ENCODE measurements at regions of chr14 and their contacts with region 1.

Region 1: DNA sequence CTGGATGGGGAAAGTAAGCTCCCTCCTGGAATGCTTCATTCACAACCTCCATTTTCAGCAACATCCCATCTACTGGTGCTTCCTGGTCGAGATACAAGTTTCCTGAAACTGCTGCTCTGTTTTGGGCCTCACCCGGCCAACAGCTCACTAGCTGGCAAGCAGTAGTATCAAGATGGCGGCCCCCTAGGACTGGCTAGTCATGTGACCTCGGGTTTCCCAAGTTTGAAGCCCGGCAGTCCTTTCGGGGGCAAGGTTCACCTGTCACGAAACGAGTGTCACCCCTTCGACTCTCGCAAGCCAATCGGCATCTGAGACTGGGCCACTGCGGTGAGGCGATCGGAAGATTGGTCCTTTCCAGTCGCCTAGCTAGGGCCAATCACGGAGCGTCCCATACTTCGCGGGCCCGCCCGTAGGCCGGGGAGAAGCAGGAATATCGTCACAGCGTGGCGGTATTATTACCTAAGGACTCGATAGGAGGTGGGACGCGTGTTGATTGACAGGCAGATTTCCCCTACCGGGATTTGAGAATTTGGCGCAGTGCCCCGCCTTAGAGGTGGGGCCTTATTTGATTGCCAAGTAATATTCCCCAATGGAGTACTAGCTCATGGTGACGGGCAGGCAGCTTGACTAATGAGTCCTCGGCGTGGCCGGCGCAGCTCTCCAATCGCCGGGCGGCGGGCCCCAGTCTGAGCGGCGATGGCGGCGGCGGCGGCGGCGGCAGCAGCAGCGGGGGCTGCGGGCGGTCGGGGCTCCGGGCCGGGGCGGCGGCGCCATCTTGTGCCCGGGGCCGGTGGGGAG is at the start of gene PABPN1:
- DNase-seq: peak; percentile 100
- H3K4me3 ChIP-seq: peak within 1 kb of the TSS; percentile 82 to 99
- H3K27ac ChIP-seq: peak within 1 kb of the TSS; percentile 97
- H3K4me1 ChIP-seq: peaks cover 26% of the 10 kb centered on the region
- H3K27me3 ChIP-seq: no peaks in the 10 kb centered on the region
- CTCF ChIP-seq: no peak
- POLR2A ChIP-seq: peak in 1 of 2 donors; percentile 81
- total RNA-seq, gene PABPN1: 66.0 TPM

Region 2: GRCh38 chr14:23269193-23269592 is 51.8 kb before region 1 on chr14:
- intact Hi-C with region 1: loop called (anchors 10 kb)
- DNase-seq: no peak
- H3K4me3 ChIP-seq: no peak overlapping the region
- H3K27ac ChIP-seq: no peak overlapping the region
- H3K4me1 ChIP-seq: no peaks in the 10 kb centered on the region
- H3K27me3 ChIP-seq: no peaks in the 10 kb centered on the region
- CTCF ChIP-seq: no peak
- POLR2A ChIP-seq: no peak

Region 3: DNA sequence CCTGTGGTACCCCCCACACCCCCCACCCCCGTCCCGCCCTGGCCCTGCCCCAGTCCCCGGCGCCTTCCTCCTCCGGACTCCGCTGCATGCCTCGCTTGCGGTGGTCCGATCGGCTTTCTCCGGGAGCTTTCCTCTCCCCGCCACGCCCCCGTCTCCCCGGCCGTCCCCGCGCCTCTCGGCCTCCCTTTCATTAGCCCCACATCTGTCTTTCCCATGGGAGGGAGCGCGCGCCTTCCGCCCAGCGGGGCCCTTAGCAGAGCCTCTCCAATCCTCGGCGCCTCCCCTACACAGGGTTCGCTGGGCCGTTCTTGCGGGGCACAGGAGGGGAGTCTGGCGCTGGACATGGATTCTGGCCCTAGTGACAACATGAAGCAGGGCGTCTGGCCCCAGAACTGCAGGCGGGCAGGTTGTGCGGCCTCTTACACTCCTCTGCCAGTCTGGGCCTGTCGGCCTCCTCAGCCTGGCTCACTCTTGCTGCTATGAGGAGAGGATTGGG is 45.5 kb after region 1 on chr14:
- intact Hi-C with region 1: loop called (anchors 1 kb)
- DNase-seq: no peak
- H3K4me3 ChIP-seq: peak overlapping the region; percentile 51 to 69
- H3K27ac ChIP-seq: peak overlapping the region; percentile 97
- H3K4me1 ChIP-seq: peaks cover 44% of the 10 kb centered on the region
- H3K27me3 ChIP-seq: no peaks in the 10 kb centered on the region
- CTCF ChIP-seq: no peak
- POLR2A ChIP-seq: peak in 1 of 2 donors; percentile 46

Region 4: GRCh38 chr14:23469127-23469905 is 148.3 kb after region 1 on chr14 and contains the start of gene NGDN:
- intact Hi-C with region 1: loop called (anchors 10 kb)
- DNase-seq: peak; percentile 98 to 100
- H3K4me3 ChIP-seq: peak within 1 kb of the TSS; percentile 85 to 94
- H3K27ac ChIP-seq: peak within 1 kb of the TSS; percentile 87
- H3K4me1 ChIP-seq: peaks cover 10% of the 10 kb centered on the region
- H3K27me3 ChIP-seq: no peaks in the 10 kb centered on the region
- CTCF ChIP-seq: peak in 2 of 3 experiments; percentile 50 to 81
- POLR2A ChIP-seq: no peak
- total RNA-seq, gene NGDN: 47.1 TPM

Region 5: GRCh38 chr14:23562268-23563203 is 241.6 kb after region 1 on chr14:
- intact Hi-C with region 1: loop called (anchors 5 kb)
- DNase-seq: no peak
- H3K4me3 ChIP-seq: no peak overlapping the region
- H3K27ac ChIP-seq: no peak overlapping the region
- H3K4me1 ChIP-seq: peaks cover 23% of the 10 kb centered on the region
- H3K27me3 ChIP-seq: no peaks in the 10 kb centered on the region
- CTCF ChIP-seq: peak; percentile 73 to 77 (median 76)
- POLR2A ChIP-seq: no peak

Measured in vagina (tissue), 2 donors.